GM12878 (cell line): ENCODE measurements at regions of chr10 and their contacts with region 1.

Region 1: GRCh38 chr10:102132563-102133372 is at the start of gene PPRC1:
- DNase-seq: peak; percentile 97
- ATAC-seq: peak; percentile 95
- H3K4me3 ChIP-seq: peak within 1 kb of the TSS; percentile 93
- H3K27ac ChIP-seq: peak within 1 kb of the TSS; percentile 75
- H3K4me1 ChIP-seq: peaks cover 10% of the 10 kb centered on the region
- H3K27me3 ChIP-seq: no peaks in the 10 kb centered on the region
- CTCF ChIP-seq: peak; percentile 87 to 98 (median 88)
- EP300 ChIP-seq: 0 out of 4 replicates have a peak, but pooled peaks of 1 of the 2 experiments have one; percentile 18
- POLR2A ChIP-seq: peak; percentile 91
- RAD21 ChIP-seq: peak; percentile 69
- polyA plus RNA-seq, gene PPRC1: 13.1 to 15.2 TPM

Region 2: GRCh38 chr10:102114861-102115618 is 17.7 kb before region 1 on chr10:
- CTCF ChIA-PET with region 1: interaction called, 16 read pairs
- POLR2A ChIA-PET with region 1: interaction called, 6 read pairs
- RAD21 ChIA-PET with region 1: interaction called, 3 read pairs
- SMC1A ChIA-PET with region 1: interaction called, 8 read pairs
- in situ Hi-C with region 1: no loop called
- intact Hi-C with region 1: loop called (anchors 1 kb)
- DNase-seq: no peak
- ATAC-seq: peak; percentile 82
- H3K4me3 ChIP-seq: peak overlapping the region; percentile 82
- H3K27ac ChIP-seq: peak overlapping the region; percentile 84
- H3K4me1 ChIP-seq: peaks cover 43% of the 10 kb centered on the region
- H3K27me3 ChIP-seq: no peaks in the 10 kb centered on the region
- CTCF ChIP-seq: no peak
- EP300 ChIP-seq: no peak
- POLR2A ChIP-seq: peak; percentile 92
- RAD21 ChIP-seq: no peak

Region 3: GRCh38 chr10:102120142-102120990 is 12.4 kb before region 1 on chr10 and contains the start of gene LDB1:
- CTCF ChIA-PET with region 1: interaction called, 24 read pairs
- POLR2A ChIA-PET with region 1: interaction called, 6 read pairs
- RAD21 ChIA-PET with region 1: interaction called, 3 read pairs
- SMC1A ChIA-PET with region 1: interaction called, 7 read pairs
- in situ Hi-C with region 1: no loop called
- intact Hi-C with region 1: loop called (anchors 1 kb)
- DNase-seq: no peak
- ATAC-seq: peak; percentile 73
- H3K4me3 ChIP-seq: peak within 1 kb of the TSS; percentile 98
- H3K27ac ChIP-seq: peak within 1 kb of the TSS; percentile 90
- H3K4me1 ChIP-seq: peaks cover 44% of the 10 kb centered on the region
- H3K27me3 ChIP-seq: no peaks in the 10 kb centered on the region
- CTCF ChIP-seq: no peak; a peak in 1 of 6 replicates
- EP300 ChIP-seq: no peak
- POLR2A ChIP-seq: peak; percentile 91
- RAD21 ChIP-seq: no peak
- polyA plus RNA-seq, gene LDB1: 1.7 to 2.3 TPM

Region 4: DNA sequence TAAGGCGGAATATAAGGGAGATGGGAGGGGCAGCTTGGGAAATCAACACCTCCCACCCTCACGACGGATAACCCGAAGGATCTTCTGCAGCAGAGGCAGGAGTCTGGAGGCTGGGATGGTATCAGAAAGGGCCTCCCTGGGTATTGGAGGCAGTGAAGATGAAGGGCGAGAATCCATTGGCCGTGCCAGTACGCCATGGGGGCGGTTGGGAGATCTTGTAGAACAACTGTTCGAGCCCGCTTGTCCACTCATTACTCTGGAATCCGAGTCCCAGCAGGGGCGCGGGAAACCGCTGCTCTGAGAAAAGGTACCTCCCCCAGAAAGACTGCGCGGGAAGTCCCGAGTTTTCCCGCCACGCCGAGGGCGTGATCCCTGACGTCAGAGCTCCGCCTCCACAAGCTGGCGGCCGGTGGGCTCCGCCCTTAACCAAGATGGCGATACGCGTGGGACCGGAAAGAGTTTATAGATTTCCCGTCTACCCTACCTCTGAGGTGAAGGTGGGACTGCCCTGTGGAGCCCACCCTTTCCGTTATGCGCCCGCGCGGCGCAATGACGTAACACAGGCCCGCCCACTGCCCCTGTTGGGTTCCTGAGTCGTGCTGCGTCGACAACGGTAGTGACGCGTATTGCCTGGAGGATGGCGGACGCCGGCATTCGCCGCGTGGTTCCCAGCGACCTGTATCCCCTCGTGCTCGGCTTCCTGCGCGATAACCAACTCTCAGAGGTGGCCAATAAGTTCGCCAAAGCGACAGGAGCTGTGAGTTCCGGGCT is 19.2 kb after region 1 on chr10 and contains the start of gene NOLC1:
- CTCF ChIA-PET with region 1: interaction called, 24 read pairs
- POLR2A ChIA-PET with region 1: interaction called, 19 read pairs
- RAD21 ChIA-PET with region 1: interaction called, 12 read pairs
- SMC1A ChIA-PET with region 1: interaction called, 29 read pairs
- in situ Hi-C with region 1: no loop called
- intact Hi-C with region 1: loop called (anchors 1 kb)
- DNase-seq: peak; percentile 98
- ATAC-seq: peak; percentile 96
- H3K4me3 ChIP-seq: peak within 1 kb of the TSS; percentile 94
- H3K27ac ChIP-seq: peak within 1 kb of the TSS; percentile 83
- H3K4me1 ChIP-seq: peaks cover 9% of the 10 kb centered on the region
- H3K27me3 ChIP-seq: no peaks in the 10 kb centered on the region
- CTCF ChIP-seq: no peak
- EP300 ChIP-seq: peak; percentile 48 to 57; a peak in 1 of 4 replicates
- POLR2A ChIP-seq: peak; percentile 99
- RAD21 ChIP-seq: no peak
- polyA plus RNA-seq, gene NOLC1: 91.7 to 103 TPM

Region 5: GRCh38 chr10:102220612-102221011 is 87.8 kb after region 1 on chr10:
- CTCF ChIA-PET with region 1: no interaction called
- POLR2A ChIA-PET with region 1: interaction called, 10 read pairs
- RAD21 ChIA-PET with region 1: no interaction called
- SMC1A ChIA-PET with region 1: no interaction called
- in situ Hi-C with region 1: no loop called
- intact Hi-C with region 1: no loop called
- DNase-seq: no peak
- ATAC-seq: no peak
- H3K4me3 ChIP-seq: no peak overlapping the region
- H3K27ac ChIP-seq: no peak overlapping the region
- H3K4me1 ChIP-seq: no peaks in the 10 kb centered on the region
- H3K27me3 ChIP-seq: no peaks in the 10 kb centered on the region
- CTCF ChIP-seq: no peak
- EP300 ChIP-seq: no peak
- POLR2A ChIP-seq: no peak
- RAD21 ChIP-seq: no peak